Activated naive CD4-positive, alpha-beta T cell treated with anti-CD3 and anti-CD28 coated beads for 36 hours (primary cell): ENCODE measurements at regions of chr18 and their contacts with region 1.

Region 1: DNA sequence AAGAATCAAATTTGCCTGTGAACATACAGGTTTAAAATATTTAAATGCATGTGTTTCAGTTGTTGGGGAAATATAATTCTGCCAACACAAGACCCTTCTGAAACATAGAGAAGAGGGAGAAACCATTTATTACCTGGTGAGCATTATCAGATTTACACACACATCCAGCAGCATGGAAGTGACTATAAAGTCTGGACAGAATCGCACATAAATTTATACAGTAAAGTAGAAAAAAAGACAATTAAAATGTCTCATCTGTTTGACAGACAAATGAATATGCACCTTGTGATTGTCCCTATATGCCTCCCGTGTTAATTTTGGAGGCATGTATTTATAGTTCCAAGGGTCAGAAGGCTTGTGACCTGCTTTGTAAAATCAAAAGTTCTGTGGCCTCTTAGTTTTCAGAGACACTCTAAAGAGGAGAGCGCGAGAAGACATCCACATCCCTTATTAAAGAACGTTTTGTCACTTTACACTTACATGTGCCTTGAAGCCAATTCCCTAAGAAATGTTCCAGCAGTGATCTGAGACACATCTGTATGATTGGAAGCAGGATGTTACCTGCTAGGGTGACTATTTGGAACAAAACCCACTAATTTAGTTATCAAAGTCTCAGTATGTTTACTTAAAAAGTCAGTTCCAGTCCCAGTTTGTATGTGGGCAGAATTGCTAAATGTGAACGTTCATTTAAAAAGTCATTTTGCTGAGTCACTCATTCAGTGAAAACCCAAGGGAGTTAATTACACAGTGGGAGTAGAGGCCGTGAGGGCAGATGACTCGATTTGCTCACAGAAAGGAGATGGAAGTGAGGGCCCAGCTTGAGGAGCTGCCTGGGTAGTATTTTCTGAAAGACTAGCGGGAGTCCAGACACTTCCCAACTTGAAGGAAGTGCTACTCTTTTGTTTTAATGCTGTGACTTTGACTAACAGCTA is 527.6 kb upstream of the MEX3C start:
- DNase-seq: no peak
- H3K4me3 Mint-ChIP-seq: no peak overlapping the region
- H3K27ac Mint-ChIP-seq: no peak overlapping the region
- H3K4me1 Mint-ChIP-seq: no peaks in the 10 kb centered on the region
- H3K27me3 Mint-ChIP-seq: peaks cover 11% of the 10 kb centered on the region

Region 2: DNA sequence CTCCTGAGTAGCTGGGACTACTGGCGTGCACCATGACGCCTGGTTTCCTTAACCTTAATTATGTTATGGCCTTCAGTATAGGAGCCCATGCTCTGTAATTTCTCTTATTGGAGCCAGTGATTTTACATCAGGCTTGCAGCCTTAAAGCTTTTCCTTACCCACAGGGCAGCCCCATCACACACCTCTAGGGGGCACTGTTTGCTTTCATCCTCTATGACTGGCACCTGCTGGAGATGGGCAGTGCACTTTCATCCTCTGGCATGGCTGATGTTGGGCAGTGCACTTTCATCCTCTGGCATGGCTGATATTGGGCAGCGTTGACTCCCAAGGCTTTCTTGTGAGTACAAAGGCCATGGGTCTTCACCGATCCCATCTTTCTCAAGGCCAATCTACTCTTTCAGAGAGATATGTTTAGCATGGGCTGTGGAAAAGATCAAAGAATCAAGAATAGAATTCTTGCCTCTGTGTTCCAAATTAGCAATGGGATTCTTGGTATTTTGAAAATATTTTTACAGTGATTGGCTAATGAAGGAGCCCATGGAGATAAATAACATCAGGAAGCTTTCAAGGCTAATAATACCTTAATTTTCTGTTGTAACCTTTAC is 446.9 kb before region 1 on chr18:
- CTCF ChIA-PET with region 1: no interaction called
- intact Hi-C with region 1: loop called (anchors 2 kb)
- DNase-seq: peak; percentile 75
- H3K4me3 Mint-ChIP-seq: no peak overlapping the region
- H3K27ac Mint-ChIP-seq: no peak overlapping the region
- H3K4me1 Mint-ChIP-seq: no peaks in the 10 kb centered on the region
- H3K27me3 Mint-ChIP-seq: no peaks in the 10 kb centered on the region

Region 3: GRCh38 chr18:51417643-51418483 is 307.2 kb before region 1 on chr18:
- CTCF ChIA-PET with region 1: no interaction called
- intact Hi-C with region 1: no loop called
- DNase-seq: no peak
- H3K4me3 Mint-ChIP-seq: no peak overlapping the region
- H3K27ac Mint-ChIP-seq: no peak overlapping the region
- H3K4me1 Mint-ChIP-seq: no peaks in the 10 kb centered on the region
- H3K27me3 Mint-ChIP-seq: no peaks in the 10 kb centered on the region

Region 4: DNA sequence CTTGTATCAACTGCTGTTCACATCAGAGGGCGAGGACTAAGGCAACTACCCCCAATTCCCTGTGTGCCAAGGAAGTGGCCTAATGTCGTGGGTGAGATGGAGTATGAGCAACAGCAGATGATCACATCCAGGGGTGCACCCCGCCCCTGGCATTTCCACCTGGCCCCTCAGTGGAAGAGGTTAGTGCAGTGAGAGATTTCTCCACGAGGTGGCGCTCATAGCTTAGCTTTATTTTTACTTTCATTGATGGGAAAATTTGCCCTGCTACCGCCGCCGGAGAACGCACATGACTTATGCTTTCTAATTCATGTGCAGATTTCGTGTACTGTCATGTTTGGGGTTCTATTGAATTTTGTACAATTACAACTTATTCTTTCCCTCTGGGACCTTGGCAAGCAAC is 57.0 kb before region 1 on chr18:
- CTCF ChIA-PET with region 1: no interaction called
- intact Hi-C with region 1: loop called (anchors 1 kb)
- DNase-seq: peak; percentile 75
- H3K4me3 Mint-ChIP-seq: no peak overlapping the region
- H3K27ac Mint-ChIP-seq: no peak overlapping the region
- H3K4me1 Mint-ChIP-seq: no peaks in the 10 kb centered on the region
- H3K27me3 Mint-ChIP-seq: peaks cover 29% of the 10 kb centered on the region